Sciatic nerve (tissue), 2 donors: ENCODE measurements at regions of chr14 and their contacts with region 1.

Region 1: DNA sequence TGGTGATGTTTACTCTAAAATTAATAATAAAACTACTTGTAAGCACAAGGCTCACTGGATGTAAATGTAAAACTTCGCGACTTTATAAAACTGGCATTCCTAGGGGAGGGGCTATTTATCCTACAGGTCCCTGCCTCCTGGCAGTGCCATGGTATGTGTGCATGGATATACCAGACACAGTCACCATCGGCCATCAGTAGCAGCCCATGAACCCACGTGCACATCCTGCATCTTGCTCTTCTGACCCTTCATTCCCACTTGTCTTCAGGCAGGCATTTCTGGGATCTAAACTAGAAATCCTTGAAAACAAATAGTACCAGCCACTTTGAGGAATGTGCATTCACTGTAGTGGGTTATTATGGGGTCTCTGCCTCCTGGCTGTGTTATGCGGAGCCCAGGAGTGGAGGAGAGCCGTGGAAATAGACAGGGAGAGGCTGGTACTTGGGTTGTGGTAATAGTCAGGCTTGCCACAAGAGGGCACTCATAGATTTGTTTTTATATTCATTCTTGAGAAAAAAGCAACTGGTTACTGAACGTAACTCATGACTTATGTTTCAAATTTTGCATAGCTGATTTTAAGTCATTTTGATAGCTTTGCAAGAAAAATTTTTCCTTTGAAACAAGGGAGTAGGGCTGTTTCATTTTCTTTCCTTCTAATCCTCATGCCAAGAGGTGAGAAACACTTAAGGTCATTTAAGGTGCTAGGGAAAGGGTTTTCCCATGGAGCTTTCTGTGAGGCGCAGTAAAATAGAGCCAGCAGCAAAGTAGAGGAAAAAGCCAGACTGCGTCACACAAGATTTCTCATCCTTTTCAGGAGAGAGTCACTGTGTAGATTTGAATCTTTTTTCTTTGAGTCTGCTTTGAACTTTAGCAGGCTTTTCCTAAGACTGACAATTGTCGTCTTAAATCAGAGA is 17.4 kb upstream of the GALNT16 start:
- DNase-seq: peak; percentile 77
- ATAC-seq: peak; percentile 86

Region 2: GRCh38 chr14:69460093-69460701 is 217.6 kb after region 1 on chr14:
- intact Hi-C with region 1: loop called (anchors 10 kb)
- DNase-seq: no peak
- ATAC-seq: peak; percentile 90

Region 3: DNA sequence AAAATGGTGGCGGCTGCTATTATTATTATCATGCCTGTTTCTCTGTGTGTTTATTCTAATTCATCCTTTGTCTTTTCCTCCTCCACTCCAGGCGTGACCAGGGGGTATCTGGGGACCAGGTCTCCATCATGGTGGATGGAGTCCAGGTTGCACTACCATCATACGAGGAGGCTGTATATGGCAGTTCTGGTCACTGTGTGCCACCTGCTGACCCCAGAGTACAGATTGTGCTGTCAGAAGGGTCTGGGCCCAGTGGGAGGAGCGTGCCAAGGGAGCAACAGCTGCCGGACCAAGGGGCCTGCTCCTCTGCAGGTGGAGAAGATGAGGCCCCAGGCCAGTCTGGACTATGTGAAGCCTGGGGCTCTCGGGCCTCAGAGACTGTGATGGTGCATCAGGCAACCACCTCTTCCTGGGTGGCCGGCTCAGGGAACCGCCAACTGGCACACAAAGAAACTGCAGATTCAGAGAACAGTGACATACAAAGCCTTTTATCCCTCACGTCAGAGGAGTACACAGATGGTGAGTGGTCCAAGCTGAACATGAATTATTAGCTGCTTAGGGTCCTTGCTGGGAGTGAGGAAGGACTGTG is 466.1 kb after region 1 on chr14:
- intact Hi-C with region 1: no loop called
- DNase-seq: no peak
- ATAC-seq: no peak